Endothelial cell of umbilical vein (primary cell): ENCODE measurements at regions of chr19 and their contacts with region 1.

Region 1: DNA sequence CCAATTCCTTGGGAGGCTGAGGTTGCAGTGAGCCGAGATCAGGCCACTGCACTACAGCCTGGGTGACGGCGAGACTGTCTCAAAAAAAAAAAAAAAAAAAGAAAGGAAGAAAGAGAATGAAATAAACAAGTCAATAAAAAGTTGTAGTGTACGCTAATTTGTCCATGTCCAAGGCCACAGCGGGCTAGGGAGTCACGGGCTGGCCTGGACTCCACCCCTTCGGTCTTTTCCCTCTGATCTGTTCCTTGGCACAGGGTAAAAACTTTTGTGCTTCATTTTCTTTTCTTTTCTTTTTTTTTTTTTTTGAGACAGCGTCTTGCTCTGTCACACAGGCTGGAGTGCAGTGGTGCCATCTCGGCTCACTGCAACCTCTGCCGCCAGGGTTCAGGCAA is 19.4 kb upstream of the MKNK2 start:
- DNase-seq: no peak
- H3K4me3 ChIP-seq: no peak overlapping the region
- H3K27ac ChIP-seq: no peak overlapping the region
- H3K4me1 ChIP-seq: no peaks in the 10 kb centered on the region
- H3K27me3 ChIP-seq: no peaks in the 10 kb centered on the region
- CTCF ChIP-seq: no peak
- POLR2A ChIP-seq: no peak

Region 2: GRCh38 chr19:1929021-1929742 is 141.2 kb before region 1 on chr19:
- CTCF ChIA-PET with region 1: interaction called, 26 read pairs
- POLR2A ChIA-PET with region 1: no interaction called
- dilution Hi-C with region 1: no loop called
- intact Hi-C with region 1: loop called (anchors 1 kb)
- DNase-seq: peak; percentile 64
- H3K4me3 ChIP-seq: peak overlapping the region in 2 of 3 experiments; percentile 23 to 26
- H3K27ac ChIP-seq: no peak overlapping the region
- H3K4me1 ChIP-seq: peaks cover 4% of the 10 kb centered on the region
- H3K27me3 ChIP-seq: no peaks in the 10 kb centered on the region
- CTCF ChIP-seq: peak; percentile 82 to 97
- POLR2A ChIP-seq: no peak

Region 3: DNA sequence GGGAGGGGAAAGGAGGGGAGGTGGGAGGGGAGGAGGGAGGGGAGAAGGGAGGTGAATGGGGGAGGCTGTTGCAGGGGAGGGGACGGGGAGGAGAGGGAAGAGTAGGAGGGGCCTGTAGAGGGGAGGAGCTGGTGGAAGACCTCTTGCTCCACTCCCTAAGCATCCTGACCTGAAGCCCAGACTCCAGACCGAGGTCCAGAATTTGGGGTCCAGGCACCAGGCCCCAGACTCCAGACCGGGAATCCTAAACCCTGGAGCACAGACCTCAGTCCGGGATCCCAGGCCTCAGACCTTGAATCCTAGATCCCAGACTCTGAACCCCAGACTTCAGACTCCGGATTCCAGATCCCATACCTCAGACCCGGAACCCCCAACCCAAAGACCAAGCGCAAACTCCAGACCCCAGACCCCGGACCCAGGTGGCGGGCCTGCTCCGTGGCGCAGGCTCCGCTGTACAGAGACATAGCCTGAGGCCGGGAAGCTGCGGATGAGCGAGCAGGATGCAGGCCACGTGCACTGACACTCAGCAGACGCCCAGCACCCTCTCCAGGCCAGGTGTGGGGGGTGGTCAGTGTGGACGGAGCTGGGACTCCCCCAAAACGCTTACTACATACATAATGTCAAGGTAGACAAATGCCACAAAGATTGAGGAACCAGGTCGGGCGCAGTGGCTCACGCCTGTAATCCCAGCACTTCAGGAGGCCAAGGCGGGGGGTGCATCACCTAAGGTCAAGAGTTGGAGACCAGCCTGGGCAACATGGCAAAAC is 54.2 kb before region 1 on chr19:
- CTCF ChIA-PET with region 1: interaction called, 75 read pairs
- POLR2A ChIA-PET with region 1: no interaction called
- dilution Hi-C with region 1: no loop called
- intact Hi-C with region 1: loop called (anchors 1 kb)
- DNase-seq: peak; percentile 42
- H3K4me3 ChIP-seq: peak overlapping the region in 1 of 3 experiments; percentile 22
- H3K27ac ChIP-seq: no peak overlapping the region
- H3K4me1 ChIP-seq: no peaks in the 10 kb centered on the region
- H3K27me3 ChIP-seq: no peaks in the 10 kb centered on the region
- CTCF ChIP-seq: no peak
- POLR2A ChIP-seq: no peak

Region 4: DNA sequence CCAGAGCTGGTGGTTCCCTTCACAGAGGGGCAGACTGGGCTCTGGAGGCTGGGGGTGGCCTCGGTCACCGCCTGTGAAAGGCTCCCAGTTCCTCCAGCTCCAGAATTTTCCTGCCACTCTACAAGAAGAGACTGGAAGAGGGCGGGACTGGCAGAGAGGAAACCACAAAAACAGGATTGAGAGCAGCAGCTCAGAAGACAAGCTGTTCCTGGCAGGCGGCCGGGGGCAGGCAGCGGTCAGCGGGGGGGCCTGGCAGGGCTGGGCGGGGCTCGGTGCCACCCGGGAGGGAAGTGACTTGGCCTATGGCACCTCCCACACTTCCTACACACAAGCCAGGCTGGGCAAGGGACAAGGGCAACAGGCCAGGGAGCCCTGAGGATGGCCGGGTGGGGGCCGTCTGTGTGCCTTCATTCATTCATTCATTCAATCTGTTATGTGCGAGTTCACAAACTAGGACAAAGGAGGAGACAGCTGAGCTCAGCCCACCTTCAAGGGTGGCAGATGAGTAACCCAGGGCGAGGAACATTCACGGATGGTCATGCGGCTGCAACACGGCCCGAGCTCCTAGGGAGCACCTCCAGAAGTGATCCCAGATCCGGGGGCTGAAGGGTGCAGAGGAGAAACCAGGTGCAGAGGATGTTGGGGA is 38.0 kb before region 1 on chr19:
- CTCF ChIA-PET with region 1: interaction called, 17 read pairs
- POLR2A ChIA-PET with region 1: no interaction called
- dilution Hi-C with region 1: no loop called
- intact Hi-C with region 1: no loop called
- DNase-seq: peak; percentile 92
- H3K4me3 ChIP-seq: no peak overlapping the region
- H3K27ac ChIP-seq: peak overlapping the region; percentile 60
- H3K4me1 ChIP-seq: peaks cover 17% of the 10 kb centered on the region
- H3K27me3 ChIP-seq: no peaks in the 10 kb centered on the region
- CTCF ChIP-seq: no peak
- POLR2A ChIP-seq: peak; percentile 70

Region 5: GRCh38 chr19:2050991-2051772 is 19.2 kb before region 1 on chr19 and contains the start of gene MKNK2:
- CTCF ChIA-PET with region 1: interaction called, 17 read pairs
- POLR2A ChIA-PET with region 1: no interaction called
- dilution Hi-C with region 1: no loop called
- intact Hi-C with region 1: no loop called
- DNase-seq: peak; percentile 80
- H3K4me3 ChIP-seq: peak within 1 kb of the TSS; percentile 81 to 95 (median 81)
- H3K27ac ChIP-seq: no peak within 1 kb of the TSS
- H3K4me1 ChIP-seq: peaks cover 29% of the 10 kb centered on the region
- H3K27me3 ChIP-seq: no peaks in the 10 kb centered on the region
- CTCF ChIP-seq: peak; percentile 59 to 61
- POLR2A ChIP-seq: peak; percentile 100
- total RNA-seq, gene MKNK2: 86.1 and 87.5 TPM in 2 replicates